ENCODE measurements at regions of chr22 and their contacts with region 1.

Region 1: GRCh38 chr22:37676736-37677492 is 1.5 kb downstream of the LGALS1 start:
- DNase-seq: peak; percentile 96
- ATAC-seq: peak; percentile 70
- H3K4me3 Mint-ChIP-seq: peak overlapping the region; percentile 83
- H3K27ac Mint-ChIP-seq: peak overlapping the region; percentile 97
- H3K4me1 Mint-ChIP-seq: peaks cover 64% of the 10 kb centered on the region
- H3K27me3 Mint-ChIP-seq: no peaks in the 10 kb centered on the region

Region 2: DNA sequence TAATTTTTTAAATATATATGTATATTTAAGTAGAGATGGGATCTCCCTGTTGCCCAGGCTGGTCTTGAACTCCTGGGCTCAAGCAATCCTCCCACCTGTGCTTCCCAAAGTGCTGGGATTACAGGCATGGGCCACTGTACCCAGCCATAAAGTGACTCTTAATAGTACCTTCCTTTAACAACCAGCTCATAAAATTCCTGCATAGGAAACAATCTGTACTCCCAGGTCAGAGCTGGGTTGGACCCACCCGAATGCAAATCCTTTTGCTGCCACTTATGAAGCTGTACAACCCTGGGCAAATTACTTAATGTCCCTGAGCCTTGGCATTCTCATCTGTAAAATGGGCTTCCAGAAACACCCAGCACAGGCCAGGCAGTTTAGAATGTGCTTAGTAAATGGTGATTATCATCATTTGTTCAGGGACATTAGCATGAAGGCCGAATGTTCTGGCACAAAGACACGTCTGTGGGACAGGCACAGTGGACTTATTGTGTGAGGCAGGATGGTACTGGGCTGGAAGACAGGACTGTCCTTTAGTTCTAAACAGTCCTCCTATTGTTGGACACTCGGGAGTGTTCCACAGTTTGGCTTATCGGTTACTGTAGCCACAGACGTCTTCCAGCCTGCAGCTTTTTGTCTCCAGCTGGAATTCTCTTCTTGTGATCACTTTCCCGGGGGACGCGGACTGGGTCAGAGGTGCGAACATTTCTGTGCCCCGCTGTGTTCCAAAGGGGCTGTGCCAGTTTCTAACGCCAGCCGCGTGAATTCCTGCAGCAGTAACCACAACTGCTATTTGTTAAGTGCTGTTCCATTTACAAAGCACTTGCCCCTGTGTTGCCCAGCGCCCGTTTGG is 12.4 kb before region 1 on chr22:
- CTCF ChIA-PET with region 1: interaction called, 184 read pairs
- DNase-seq: no peak
- ATAC-seq: no peak
- H3K4me3 Mint-ChIP-seq: no peak overlapping the region
- H3K27ac Mint-ChIP-seq: no peak overlapping the region
- H3K4me1 Mint-ChIP-seq: peaks cover 31% of the 10 kb centered on the region
- H3K27me3 Mint-ChIP-seq: no peaks in the 10 kb centered on the region

Measured in activated CD8-positive, alpha-beta memory T cell treated with anti-CD3 and anti-CD28 coated beads, Interleukin-2, amount 10 ng/mL, durations not matched to agents 7 days and 5 days (primary cell).